Mammary epithelial cell (primary cell): ENCODE measurements at regions of chr2 and their contacts with region 1.

Region 1: DNA sequence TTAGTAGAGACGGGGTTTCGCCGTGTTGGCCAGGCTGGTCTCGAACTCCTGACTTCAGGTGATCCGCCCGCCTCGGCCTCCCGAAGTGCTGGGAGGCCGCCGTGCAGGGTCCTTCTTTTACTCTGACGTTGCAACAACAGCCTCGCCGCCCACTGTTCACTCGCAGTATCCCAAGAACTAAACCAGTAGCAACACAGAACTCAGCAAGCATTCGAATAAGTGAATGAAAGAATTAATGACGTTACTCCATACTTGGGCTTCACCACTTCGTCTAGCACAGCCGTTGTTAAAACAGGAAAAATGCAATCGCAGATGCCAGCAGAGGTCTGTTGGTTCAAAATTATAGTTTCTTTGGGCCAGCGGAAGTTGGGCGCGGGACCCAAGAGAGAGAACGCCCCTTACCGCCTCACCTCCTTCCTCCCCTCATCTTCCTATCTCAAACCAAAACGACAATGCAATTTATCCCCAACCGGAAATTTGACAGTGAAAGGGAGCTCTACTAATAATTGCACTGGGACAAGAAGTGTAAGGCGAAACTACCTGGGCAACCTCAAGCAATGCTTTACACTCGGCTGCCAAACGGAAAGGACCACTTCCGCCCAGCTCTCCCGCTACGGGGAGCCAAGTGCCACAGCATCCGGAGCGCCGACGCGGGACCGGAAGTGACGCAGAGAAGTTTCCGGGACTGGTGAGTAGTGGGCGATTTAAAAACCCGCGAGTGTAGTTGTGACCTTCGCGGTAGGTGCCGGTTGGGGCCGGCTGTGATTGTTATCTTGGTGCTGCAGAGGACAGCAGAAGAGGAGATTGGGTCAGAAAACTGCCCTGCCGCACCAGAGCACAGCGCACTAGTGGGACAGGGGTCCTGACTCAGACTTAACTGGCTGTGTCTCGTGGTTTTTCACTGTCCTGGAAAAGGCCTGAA is at the starts of genes NIF3L1 and PPIL3:
- DNase-seq: peak; percentile 98
- H3K4me3 ChIP-seq: peak within 1 kb of the TSS; percentile 77 to 97 (median 85)
- H3K27ac ChIP-seq: peak within 1 kb of the TSS; percentile 92
- H3K4me1 ChIP-seq: peaks cover 5% of the 10 kb centered on the region
- H3K27me3 ChIP-seq: no peaks in the 10 kb centered on the region
- CTCF ChIP-seq: no peak
- total RNA-seq, gene NIF3L1: 18.0 to 23.2 TPM
- total RNA-seq, gene PPIL3: 18.5 to 45.1 TPM

Region 2: DNA sequence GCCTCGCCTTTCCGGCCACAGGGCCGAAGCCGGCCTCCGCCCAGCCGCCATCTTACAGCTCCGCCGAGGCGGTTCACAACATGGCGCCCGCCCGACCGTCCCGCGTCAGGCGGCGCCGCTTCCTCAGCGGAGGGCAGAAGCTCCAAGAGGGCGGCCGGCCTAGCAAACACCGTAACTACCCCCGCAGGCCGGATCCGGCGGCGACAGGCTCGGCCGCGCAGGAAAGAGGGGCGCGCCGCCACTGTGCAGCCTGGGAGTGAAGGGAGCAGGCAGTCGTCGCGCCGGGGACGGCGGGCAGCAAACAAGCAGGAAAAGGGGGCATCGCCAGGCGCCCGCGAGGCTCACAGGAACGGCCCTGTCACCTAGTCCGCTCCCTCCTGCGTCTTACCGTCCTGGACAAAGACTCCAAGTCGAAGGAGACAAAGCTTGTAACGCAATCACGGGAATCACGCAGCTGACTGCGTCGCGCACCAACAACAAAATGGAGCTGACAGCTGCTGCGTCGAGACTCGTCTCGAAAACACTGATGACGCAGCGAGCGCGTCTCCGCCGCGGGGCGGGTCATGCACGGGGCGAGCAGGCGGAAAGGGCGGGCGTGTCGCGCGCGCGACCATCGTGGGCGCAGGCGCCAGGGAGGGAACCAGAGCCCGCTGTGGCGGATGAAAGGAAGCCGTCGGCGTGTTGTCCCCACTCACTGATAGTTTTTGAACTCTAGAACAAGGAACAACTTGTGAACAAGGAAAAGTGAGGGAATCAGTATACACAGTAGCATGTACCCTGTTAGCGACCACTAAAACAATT is 24.6 kb before region 1 on chr2 and contains the start of gene CLK1:
- CTCF ChIA-PET with region 1: interaction called, 4 read pairs
- dilution Hi-C with region 1: no loop called
- in situ Hi-C with region 1: no loop called
- intact Hi-C with region 1: loop called (anchors 2 kb)
- DNase-seq: peak; percentile 92
- H3K4me3 ChIP-seq: peak within 1 kb of the TSS; percentile 82 to 100 (median 99)
- H3K27ac ChIP-seq: peak within 1 kb of the TSS; percentile 99
- H3K4me1 ChIP-seq: peaks cover 22% of the 10 kb centered on the region
- H3K27me3 ChIP-seq: no peaks in the 10 kb centered on the region
- CTCF ChIP-seq: no peak
- total RNA-seq, gene CLK1: 55.0 to 55.2 TPM

Region 3: DNA sequence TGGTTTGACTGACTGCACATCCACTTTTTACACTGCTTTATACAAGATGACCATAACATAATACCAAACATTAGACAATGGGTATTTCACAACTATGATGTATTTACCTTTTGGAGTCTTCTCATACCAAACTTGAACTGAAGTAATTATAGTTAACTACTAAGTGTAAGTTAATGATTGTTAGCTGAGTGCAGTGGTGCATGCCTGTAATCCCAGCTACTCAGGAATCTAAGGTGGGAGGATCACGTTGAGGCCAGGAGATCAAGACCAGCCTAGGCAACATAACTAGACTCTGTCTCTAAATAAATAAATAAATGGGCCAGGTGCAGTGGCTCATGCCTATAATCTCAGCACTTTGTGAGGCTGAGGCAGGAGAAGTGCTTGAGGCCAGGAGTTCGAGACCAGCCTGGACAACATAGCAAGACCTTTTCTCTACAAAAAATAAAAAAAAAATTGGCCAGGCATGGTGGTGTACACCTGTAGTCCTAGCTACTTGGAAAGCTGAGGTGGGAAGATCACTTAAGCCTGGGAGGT is 119.4 kb after region 1 on chr2:
- CTCF ChIA-PET with region 1: no interaction called
- dilution Hi-C with region 1: no loop called
- in situ Hi-C with region 1: no loop called
- intact Hi-C with region 1: no loop called
- DNase-seq: no peak
- H3K4me3 ChIP-seq: no peak overlapping the region
- H3K27ac ChIP-seq: no peak overlapping the region
- H3K4me1 ChIP-seq: no peaks in the 10 kb centered on the region
- H3K27me3 ChIP-seq: no peaks in the 10 kb centered on the region
- CTCF ChIP-seq: no peak

Region 4: GRCh38 chr2:201171259-201171814 is 282.4 kb after region 1 on chr2:
- CTCF ChIA-PET with region 1: no interaction called
- dilution Hi-C with region 1: no loop called
- in situ Hi-C with region 1: no loop called
- intact Hi-C with region 1: loop called (anchors 5 kb)
- DNase-seq: no peak
- H3K4me3 ChIP-seq: no peak overlapping the region
- H3K27ac ChIP-seq: no peak overlapping the region
- H3K4me1 ChIP-seq: no peaks in the 10 kb centered on the region
- H3K27me3 ChIP-seq: no peaks in the 10 kb centered on the region
- CTCF ChIP-seq: no peak